OCI-LY7 (cell line): ENCODE measurements at regions of chr3 and their contacts with region 1.

Region 1: GRCh38 chr3:179451265-179452175 is at the start of gene GNB4:
- DNase-seq: peak; percentile 64
- H3K4me3 ChIP-seq: peak within 1 kb of the TSS; percentile 69
- H3K27ac ChIP-seq: no peak within 1 kb of the TSS
- H3K4me1 ChIP-seq: peaks cover 14% of the 10 kb centered on the region
- CTCF ChIP-seq: no peak
- total RNA-seq, gene GNB4: 3.0 and 3.7 TPM in 2 replicates

Region 2: GRCh38 chr3:179464323-179465089 is 13.0 kb after region 1 on chr3:
- CTCF ChIA-PET with region 1: interaction called, 4 read pairs
- POLR2A ChIA-PET with region 1: interaction called, 18 read pairs
- intact Hi-C with region 1: no loop called
- DNase-seq: no peak
- H3K4me3 ChIP-seq: no peak overlapping the region
- H3K27ac ChIP-seq: no peak overlapping the region
- H3K4me1 ChIP-seq: peaks cover 31% of the 10 kb centered on the region
- CTCF ChIP-seq: no peak